ENCODE measurements at regions of chr1 and their contacts with region 1.

Region 1: GRCh38 chr1:109397538-109398342 is at the start of gene SORT1:
- DNase-seq: peak in 13 of 14 experiments; percentile 5 to 74 (median 32)
- ATAC-seq: peak; percentile 91
- H3K4me3 ChIP-seq: peak within 1 kb of the TSS; percentile 46
- H3K4me3 Mint-ChIP-seq: peak within 1 kb of the TSS; percentile 89
- H3K27ac ChIP-seq: no peak within 1 kb of the TSS
- H3K27ac Mint-ChIP-seq: no peak within 1 kb of the TSS
- H3K4me1 ChIP-seq: peaks cover 16% of the 10 kb centered on the region
- H3K4me1 Mint-ChIP-seq: peaks cover 16% of the 10 kb centered on the region
- H3K27me3 ChIP-seq: peaks cover 35 to 40% of the 10 kb centered on the region in 2 experiments
- H3K27me3 Mint-ChIP-seq: peaks cover 47% of the 10 kb centered on the region
- CTCF ChIP-seq: no peak
- total RNA-seq, gene SORT1: 0.22 to 0.73 TPM

Region 2: DNA sequence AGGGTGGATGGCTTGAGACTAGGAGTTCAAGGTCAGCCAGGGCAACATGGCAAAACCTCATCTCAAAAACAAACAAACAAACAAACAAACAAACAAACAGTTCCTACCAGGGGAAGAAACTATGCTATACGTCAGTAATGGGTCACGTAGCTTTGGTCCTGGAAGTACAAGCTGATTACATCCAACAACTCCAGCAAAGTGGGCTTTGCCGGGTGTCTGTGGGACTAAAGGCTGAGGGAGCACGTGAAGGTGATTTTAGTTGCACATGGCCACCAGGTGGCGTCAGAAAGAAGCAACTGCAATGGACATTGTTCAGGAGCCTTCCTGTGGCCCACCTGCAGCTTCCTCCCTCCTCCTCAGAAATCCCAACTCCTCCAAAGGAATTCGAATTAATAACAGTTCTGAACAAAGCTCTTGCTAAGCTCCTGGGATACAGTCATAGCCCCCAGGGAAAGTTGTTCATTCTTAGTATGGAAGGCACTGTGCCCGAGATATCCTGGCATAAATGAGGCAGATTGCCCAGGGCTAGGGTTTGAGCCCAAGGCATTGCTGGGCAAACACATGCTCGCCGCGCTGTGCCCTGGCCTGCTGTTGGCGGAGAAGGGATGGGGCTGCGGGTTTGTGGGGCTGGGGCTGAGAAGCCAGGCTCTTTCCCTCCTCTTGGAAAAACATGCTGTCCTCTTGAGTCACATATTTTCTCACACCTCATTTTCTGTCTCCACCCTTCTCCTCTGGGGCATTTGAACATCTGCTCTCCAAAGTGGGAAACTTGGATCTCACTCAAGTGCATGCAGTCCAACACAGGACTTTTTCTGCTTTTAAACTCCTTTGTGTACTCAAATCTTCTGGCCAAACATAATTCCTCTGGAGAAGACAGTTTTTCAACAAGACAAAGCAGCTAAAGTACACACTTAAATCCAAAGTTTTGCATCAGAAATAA is 569.4 kb before region 1 on chr1:
- CTCF ChIA-PET with region 1: no interaction called
- POLR2A ChIA-PET with region 1: no interaction called
- intact Hi-C with region 1: loop called in 1 of 2 experiments (anchors 5 kb)
- DNase-seq: peak; percentile 46 to 83 (median 60)
- ATAC-seq: peak; percentile 68
- H3K4me3 ChIP-seq: no peak overlapping the region
- H3K4me3 Mint-ChIP-seq: no peak overlapping the region
- H3K27ac ChIP-seq: no peak overlapping the region
- H3K27ac Mint-ChIP-seq: no peak overlapping the region
- H3K4me1 ChIP-seq: peaks cover 4% of the 10 kb centered on the region
- H3K4me1 Mint-ChIP-seq: no peaks in the 10 kb centered on the region
- H3K27me3 ChIP-seq: no peaks in the 10 kb centered on the region
- H3K27me3 Mint-ChIP-seq: no peaks in the 10 kb centered on the region
- CTCF ChIP-seq: peak; percentile 78

Region 3: DNA sequence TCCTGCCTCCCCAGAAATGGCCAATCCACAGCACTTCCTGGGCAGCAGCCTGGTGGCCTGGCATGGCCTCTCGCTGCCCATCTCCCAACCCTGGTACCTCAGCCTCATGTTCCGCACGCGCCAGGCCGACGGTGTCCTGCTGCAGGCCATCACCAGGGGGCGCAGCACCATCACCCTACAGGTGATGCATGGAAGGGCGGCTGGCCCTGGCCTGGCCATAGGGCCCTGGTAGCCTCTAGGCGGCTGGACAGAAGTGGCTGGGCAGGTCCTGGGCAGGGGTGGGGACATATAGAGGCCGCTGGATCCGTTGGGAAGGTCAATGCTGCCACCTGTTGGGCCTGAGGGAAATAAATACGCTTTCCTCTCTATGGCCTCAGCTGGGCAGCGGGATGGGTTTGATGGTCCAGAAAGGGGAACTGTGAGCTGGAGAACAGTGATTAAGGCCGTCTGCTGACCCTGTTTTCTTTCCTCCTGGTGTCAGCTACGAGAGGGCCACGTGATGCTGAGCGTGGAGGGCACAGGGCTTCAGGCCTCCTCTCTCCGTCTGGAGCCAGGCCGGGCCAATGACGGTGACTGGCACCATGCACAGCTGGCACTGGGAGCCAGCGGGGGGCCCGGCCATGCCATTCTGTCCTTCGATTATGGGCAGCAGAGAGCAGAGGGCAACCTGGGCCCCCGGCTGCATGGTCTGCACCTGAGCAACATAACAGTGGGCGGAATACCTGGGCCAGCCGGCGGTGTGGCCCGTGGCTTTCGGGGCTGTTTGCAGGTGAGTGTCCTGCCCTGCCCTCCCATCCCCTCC is 133.9 kb before region 1 on chr1:
- CTCF ChIA-PET with region 1: interaction called, 3 read pairs
- POLR2A ChIA-PET with region 1: interaction called, 3 read pairs
- intact Hi-C with region 1: loop called (anchors 1 kb)
- DNase-seq: peak; percentile 62 to 87 (median 71)
- ATAC-seq: peak; percentile 97
- H3K4me3 ChIP-seq: no peak overlapping the region
- H3K4me3 Mint-ChIP-seq: no peak overlapping the region
- H3K27ac ChIP-seq: no peak overlapping the region
- H3K27ac Mint-ChIP-seq: no peak overlapping the region
- H3K4me1 ChIP-seq: peaks cover 6% of the 10 kb centered on the region
- H3K4me1 Mint-ChIP-seq: no peaks in the 10 kb centered on the region
- H3K27me3 ChIP-seq: no peaks in the 10 kb centered on the region
- H3K27me3 Mint-ChIP-seq: no peaks in the 10 kb centered on the region
- CTCF ChIP-seq: peak; percentile 83

Region 4: GRCh38 chr1:109277434-109278204 is 120.1 kb before region 1 on chr1:
- CTCF ChIA-PET with region 1: interaction called, 19 read pairs
- POLR2A ChIA-PET with region 1: interaction called, 3 read pairs
- intact Hi-C with region 1: loop called (anchors 1 kb)
- DNase-seq: peak; percentile 34 to 76 (median 48)
- ATAC-seq: peak; percentile 78
- H3K4me3 ChIP-seq: no peak overlapping the region
- H3K4me3 Mint-ChIP-seq: no peak overlapping the region
- H3K27ac ChIP-seq: no peak overlapping the region
- H3K27ac Mint-ChIP-seq: no peak overlapping the region
- H3K4me1 ChIP-seq: peaks cover 19% of the 10 kb centered on the region
- H3K4me1 Mint-ChIP-seq: peaks cover 4% of the 10 kb centered on the region
- H3K27me3 ChIP-seq: no peaks in the 10 kb centered on the region
- H3K27me3 Mint-ChIP-seq: no peaks in the 10 kb centered on the region
- CTCF ChIP-seq: peak; percentile 79

Region 5: DNA sequence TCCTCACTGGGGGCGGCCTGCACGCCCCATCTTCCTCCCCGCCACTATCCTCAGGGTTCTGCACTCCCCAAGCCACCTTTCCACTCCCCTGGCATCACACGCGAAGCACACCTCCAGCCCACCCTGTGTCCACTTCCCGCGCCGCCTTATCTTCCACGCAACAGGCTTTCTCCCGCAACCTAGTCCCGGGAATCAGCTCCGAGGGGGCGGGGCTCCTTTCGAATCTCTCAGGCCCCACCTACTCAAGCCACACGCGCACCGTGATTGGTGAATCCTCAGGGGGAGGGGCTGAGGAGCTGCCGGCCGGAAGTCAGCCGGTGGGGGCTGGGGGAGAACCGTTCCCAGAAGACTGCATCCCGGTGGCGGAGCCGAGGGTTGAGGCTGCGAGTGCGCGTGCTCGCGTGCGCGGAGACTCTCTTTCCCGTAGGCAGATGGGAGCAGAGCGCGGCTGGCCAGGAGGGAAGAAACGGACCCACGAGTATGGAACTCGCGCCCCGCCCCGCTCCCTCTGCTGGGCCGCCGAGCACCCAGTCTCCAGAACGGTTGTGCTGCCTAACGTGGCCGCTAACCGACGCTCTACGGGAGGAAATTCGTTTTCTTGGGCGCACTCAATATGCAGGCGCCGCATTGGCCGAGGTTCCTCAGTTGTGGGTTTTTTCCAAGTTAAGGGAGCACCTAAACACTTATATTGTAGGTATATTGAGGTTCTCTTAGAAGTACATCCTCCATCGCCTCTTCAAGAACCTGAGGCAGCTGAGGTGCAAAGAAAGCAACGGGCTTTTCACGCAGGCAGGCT is 114.6 kb before region 1 on chr1 and contains the start of gene PSRC1:
- CTCF ChIA-PET with region 1: interaction called, 19 read pairs
- POLR2A ChIA-PET with region 1: interaction called, 4 read pairs
- intact Hi-C with region 1: loop called in 1 of 2 experiments (anchors 1 kb)
- DNase-seq: peak; percentile 81 to 94 (median 85)
- ATAC-seq: peak; percentile 93
- H3K4me3 ChIP-seq: peak within 1 kb of the TSS; percentile 70
- H3K4me3 Mint-ChIP-seq: peak within 1 kb of the TSS; percentile 94
- H3K27ac ChIP-seq: peak within 1 kb of the TSS; percentile 31 to 59
- H3K27ac Mint-ChIP-seq: peak within 1 kb of the TSS; percentile 78
- H3K4me1 ChIP-seq: peaks cover 27% of the 10 kb centered on the region
- H3K4me1 Mint-ChIP-seq: peaks cover 19% of the 10 kb centered on the region
- H3K27me3 ChIP-seq: no peaks in the 10 kb centered on the region
- H3K27me3 Mint-ChIP-seq: no peaks in the 10 kb centered on the region
- CTCF ChIP-seq: peak; percentile 71
- total RNA-seq, gene PSRC1: 0.22 to 0.91 TPM